Gastrocnemius medialis (tissue), 4 donors: ENCODE measurements at regions of chr16 and their contacts with region 1.

Region 1: GRCh38 chr16:67183627-67184328 is at the start of gene MATCAP1:
- DNase-seq: peak; percentile 95 to 97
- ATAC-seq: peak; percentile 93 to 96
- H3K4me3 ChIP-seq: peak within 1 kb of the TSS; percentile 65 to 88 (median 70)
- H3K27ac ChIP-seq: peak within 1 kb of the TSS; percentile 85 to 97 (median 95)
- H3K4me1 ChIP-seq: peaks cover 16 to 31% of the 10 kb centered on the region in 2 donors
- H3K27me3 ChIP-seq: no peaks in the 10 kb centered on the region
- CTCF ChIP-seq: no peak
- POLR2A ChIP-seq: peak; percentile 61 to 63
- total RNA-seq, gene MATCAP1: 2.5 to 7.7 (median 4.5) TPM

Region 2: GRCh38 chr16:66275775-66276428 is 907.9 kb before region 1 on chr16:
- in situ Hi-C with region 1: no loop called
- intact Hi-C with region 1: no loop called
- DNase-seq: no peak
- ATAC-seq: no peak
- H3K4me3 ChIP-seq: no peak overlapping the region
- H3K27ac ChIP-seq: no peak overlapping the region
- H3K4me1 ChIP-seq: no peaks in the 10 kb centered on the region
- H3K27me3 ChIP-seq: peaks cover 0 to 1% (median 0%) of the 10 kb centered on the region in 3 donors
- CTCF ChIP-seq: peak in 2 of 5 experiments; percentile 22 to 29
- POLR2A ChIP-seq: no peak

Region 3: DNA sequence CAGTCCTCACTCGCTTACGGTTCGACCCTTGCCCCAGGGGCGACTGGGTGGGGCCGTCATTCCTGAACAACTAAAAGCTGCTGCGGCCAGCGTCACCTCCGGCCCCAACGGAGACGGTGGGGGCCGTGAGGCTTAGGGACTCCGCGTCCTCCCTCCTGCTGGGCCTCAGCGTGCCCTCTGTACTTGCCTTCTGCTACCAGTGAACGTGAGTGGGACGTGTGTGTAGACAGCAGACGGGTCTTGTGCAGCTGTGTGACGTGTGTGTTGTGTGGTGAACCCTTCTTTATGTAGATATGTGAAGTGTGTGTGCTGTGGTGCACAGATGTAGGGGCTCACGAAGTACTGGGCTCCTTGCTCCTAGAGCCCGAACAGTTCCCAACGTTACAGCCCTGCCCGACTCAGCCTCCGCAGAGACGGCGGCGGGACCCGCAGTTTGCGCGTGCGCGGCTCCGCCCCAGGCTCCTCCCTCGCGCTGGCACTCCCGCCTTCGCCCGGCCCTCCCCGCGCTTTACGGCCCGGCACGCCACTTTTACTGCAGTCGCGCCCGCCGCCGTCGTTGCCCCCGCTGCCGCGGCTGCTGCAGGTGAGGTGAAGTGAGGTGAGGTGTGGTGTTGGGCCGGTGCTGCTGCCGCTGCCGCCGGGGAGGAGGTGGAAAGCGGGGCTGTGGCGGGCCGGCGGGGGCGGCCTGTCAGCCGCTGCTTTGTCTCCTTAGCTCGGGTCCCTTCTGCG is 74.2 kb before region 1 on chr16 and contains the start of gene PHAF1:
- in situ Hi-C with region 1: no loop called
- intact Hi-C with region 1: loop called (anchors 1 kb)
- DNase-seq: peak; percentile 88 to 93
- ATAC-seq: peak; percentile 84 to 91
- H3K4me3 ChIP-seq: peak within 1 kb of the TSS; percentile 85 to 97 (median 93)
- H3K27ac ChIP-seq: peak within 1 kb of the TSS; percentile 83 to 92 (median 89)
- H3K4me1 ChIP-seq: peaks cover 36 to 42% of the 10 kb centered on the region in 2 donors
- H3K27me3 ChIP-seq: no peaks in the 10 kb centered on the region
- CTCF ChIP-seq: no peak
- POLR2A ChIP-seq: peak; percentile 89 to 91
- total RNA-seq, gene PHAF1: 23.3 to 63.4 (median 48.9) TPM